ENCODE measurements at regions of chr6 and their contacts with region 1.

Region 1: DNA sequence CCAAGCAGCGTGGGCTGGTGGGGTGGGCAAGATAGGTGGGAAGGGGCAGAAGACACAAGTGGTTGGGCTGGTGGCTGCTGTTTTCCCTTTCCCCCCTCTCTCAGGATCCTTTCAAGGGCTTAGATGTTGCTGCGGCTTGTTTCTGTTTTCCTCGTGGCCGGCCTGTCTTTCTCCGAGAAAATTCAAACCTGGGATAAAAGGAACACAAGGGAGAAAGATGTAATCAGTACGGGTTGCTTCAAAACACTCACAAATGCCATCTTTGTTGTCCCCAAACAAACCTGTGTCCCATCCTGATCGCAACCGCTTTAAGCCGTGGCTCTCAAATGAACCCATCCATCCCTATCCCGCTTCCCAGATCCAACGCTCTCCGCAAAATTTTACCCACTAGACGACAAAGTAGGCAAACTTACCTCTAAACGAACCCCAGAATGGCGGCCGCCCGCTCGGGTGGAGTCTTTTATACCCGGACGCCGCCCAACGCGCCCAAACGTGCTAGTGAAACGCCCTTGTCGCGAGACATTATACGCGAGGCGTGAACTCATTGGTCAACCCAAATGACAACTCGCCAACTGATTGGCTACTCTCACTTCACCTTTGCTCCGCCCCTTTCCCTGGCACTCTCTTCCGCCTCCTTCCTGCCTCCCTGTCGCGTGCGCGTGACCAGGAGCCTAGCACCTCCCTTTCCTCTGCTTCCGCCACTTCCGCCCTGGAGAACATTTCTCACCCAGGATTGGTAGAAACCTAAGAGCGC is at the start of gene PPP1R10:
- DNase-seq: peak; percentile 86
- ATAC-seq: peak; percentile 77
- H3K4me3 Mint-ChIP-seq: peak within 1 kb of the TSS; percentile 99
- H3K27ac Mint-ChIP-seq: peak within 1 kb of the TSS; percentile 99
- H3K4me1 Mint-ChIP-seq: peaks cover 35% of the 10 kb centered on the region
- H3K27me3 Mint-ChIP-seq: no peaks in the 10 kb centered on the region
- CTCF ChIP-seq: no peak
- total RNA-seq, gene PPP1R10: 85.6 and 112 TPM in 2 replicates

Region 2: DNA sequence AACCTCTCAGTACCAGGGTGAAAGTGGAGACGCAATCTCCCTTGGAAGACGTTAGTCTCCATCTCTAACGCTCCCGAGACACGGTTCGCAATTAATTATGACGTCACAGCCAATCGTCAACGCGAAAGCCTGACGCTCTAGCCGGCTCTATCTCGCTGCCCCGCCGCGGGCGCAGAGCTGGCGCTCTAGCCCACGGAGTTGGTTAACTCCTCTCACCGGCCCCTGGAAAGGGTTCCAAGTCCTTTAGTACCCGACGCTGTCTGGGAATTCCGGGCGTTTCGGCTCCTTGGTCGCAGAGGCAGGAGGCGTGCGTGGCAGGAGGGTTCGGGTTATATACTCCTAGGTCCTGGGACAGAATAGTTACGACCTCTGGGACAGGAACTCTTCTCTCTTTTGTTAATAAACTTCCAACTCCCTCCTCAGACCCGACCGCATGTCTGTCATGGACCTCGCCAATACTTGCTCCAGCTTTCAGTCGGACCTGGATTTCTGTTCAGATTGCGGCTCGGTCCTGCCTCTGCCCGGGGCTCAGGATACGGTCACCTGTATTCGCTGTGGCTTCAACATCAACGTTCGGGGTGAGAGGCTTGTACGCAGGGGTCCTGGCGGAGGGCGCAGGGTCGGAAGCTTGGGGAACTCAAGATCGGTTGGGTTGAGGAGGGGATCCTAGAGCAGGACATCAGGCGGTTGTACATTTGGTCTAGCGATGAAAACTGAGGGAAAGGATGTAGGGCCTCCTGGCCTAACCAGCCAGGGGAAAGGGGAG is 555.7 kb before region 1 on chr6 and contains the start of gene POLR1H:
- CTCF ChIA-PET with region 1: no interaction called
- POLR2A ChIA-PET with region 1: no interaction called
- intact Hi-C with region 1: loop called (anchors 5 kb)
- DNase-seq: peak; percentile 73
- ATAC-seq: peak; percentile 91
- H3K4me3 Mint-ChIP-seq: peak within 1 kb of the TSS; percentile 98
- H3K27ac Mint-ChIP-seq: peak within 1 kb of the TSS; percentile 97
- H3K4me1 Mint-ChIP-seq: peaks cover 44% of the 10 kb centered on the region
- H3K27me3 Mint-ChIP-seq: no peaks in the 10 kb centered on the region
- CTCF ChIP-seq: no peak
- total RNA-seq, gene POLR1H: 44.1 and 50.5 TPM in 2 replicates

Region 3: DNA sequence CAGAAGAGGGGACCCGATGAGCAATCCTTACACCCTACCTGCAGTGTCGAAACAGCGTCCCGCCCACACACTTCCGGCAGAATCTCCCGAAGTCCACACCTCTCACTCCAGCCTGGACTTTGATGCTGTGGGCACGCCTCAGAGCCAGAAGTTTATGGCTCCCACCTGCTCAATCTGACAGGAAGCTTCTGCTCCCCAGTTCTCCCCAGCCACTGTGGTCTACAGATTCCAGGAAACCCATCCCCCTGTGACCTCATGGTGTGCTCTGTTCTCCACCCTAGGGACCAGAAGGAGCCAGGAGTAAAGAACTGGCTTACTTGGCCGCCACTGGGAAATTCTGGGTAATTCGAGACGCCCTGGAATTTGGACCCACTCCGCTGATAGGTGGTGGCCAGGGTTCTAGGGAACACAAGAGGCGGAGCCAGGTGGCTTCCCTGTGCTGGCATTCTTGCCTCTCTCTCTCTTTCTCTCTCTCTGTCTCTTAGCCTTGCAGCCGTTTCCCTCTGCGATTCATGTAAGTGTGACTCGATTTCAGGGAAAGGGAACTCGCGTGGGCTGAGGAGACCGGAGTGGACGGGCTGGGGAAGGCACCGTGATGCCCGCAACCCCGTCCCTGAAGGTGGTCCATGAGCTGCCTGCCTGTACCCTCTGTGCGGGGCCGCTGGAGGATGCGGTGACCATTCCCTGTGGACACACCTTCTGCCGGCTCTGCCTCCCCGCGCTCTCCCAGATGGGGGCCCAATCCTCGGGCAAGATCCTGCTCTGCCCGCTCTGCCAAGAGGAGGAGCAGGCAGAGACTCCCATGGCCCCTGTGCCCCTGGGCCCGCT is 453.7 kb before region 1 on chr6 and contains the start of gene TRIM15:
- CTCF ChIA-PET with region 1: no interaction called
- POLR2A ChIA-PET with region 1: no interaction called
- intact Hi-C with region 1: no loop called
- DNase-seq: no peak
- ATAC-seq: no peak
- H3K4me3 Mint-ChIP-seq: no peak within 1 kb of the TSS
- H3K27ac Mint-ChIP-seq: no peak within 1 kb of the TSS
- H3K4me1 Mint-ChIP-seq: no peaks in the 10 kb centered on the region
- H3K27me3 Mint-ChIP-seq: peaks cover 22% of the 10 kb centered on the region
- CTCF ChIP-seq: no peak
- total RNA-seq, gene TRIM15: not detected in 2 replicates

Region 4: DNA sequence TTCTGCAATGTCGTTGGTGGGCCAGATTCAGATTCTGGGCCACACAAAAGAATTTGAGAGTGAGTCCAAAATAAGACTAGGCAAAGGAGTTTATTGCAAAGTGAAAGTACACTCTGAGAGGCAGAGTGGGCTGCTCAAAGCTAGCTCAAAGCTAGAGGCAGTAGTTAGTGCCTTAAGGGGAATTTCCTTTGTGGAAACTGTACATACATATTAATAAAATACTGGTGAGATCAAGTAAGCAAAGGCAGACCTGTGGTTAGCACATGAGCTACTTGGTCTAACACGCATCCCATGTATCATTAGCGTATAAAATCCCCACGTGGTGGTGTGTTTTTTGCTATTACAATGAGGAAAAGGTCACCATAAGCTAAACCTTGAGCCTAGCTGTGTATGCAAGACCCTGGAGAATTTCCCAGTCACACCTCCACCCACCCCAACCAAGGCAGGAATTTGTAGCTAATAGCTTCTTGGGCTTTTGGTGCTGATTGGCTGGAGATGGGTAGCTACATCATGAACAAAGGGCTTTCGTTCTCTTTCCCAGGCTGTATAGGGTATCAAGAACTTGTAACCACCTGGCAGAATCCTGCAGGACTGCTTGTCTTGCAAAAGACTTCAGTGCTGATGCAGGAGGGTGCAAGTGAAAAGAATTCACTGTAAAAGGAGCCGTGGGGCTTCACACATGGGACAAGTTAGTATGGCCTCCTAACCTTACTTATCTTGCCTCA is 389.1 kb before region 1 on chr6:
- CTCF ChIA-PET with region 1: no interaction called
- POLR2A ChIA-PET with region 1: no interaction called
- intact Hi-C with region 1: no loop called
- DNase-seq: no peak
- ATAC-seq: no peak
- H3K4me3 Mint-ChIP-seq: no peak overlapping the region
- H3K27ac Mint-ChIP-seq: no peak overlapping the region
- H3K4me1 Mint-ChIP-seq: no peaks in the 10 kb centered on the region
- H3K27me3 Mint-ChIP-seq: peaks cover 10% of the 10 kb centered on the region
- CTCF ChIP-seq: no peak

Region 5: DNA sequence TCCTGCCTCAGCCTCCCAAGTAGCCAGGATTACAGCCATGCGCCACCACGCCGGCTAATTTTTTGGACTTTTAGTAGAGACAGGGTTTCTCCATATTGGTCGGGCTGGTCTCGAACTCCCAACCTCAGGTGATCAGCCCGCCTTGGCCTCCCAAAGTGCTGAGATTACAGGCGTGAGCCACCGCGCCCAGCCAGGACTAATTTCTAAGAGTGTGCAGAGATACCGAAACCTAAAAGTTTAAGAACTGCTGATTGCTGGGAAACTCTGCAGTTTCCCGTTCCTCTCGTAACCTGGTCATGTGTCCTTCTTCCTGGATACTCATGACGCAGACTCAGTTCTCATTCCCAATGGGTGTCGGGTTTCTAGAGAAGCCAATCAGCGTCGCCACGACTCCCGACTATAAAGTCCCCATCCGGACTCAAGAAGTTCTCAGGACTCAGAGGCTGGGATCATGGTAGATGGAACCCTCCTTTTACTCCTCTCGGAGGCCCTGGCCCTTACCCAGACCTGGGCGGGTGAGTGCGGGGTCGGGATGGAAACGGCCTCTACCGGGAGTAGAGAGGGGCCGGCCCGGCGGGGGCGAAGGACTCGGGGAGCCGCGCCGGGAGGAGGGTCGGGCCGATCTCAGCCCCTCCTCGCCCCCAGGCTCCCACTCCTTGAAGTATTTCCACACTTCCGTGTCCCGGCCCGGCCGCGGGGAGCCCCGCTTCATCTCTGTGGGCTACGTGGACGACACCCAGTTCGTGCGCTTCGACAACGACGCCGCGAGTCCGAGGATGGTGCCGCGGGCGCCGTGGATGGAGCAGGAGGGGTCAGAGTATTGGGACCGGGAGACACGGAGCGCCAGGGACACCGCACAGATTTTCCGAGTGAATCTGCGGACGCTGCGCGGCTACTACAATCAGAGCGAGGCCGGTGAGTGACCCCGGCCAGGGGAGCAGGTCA is 127.6 kb before region 1 on chr6 and contains the start of gene HLA-E:
- CTCF ChIA-PET with region 1: interaction called, 3 read pairs
- POLR2A ChIA-PET with region 1: interaction called, 11 read pairs
- intact Hi-C with region 1: no loop called
- DNase-seq: peak; percentile 70
- ATAC-seq: peak; percentile 83
- H3K4me3 Mint-ChIP-seq: peak within 1 kb of the TSS; percentile 98
- H3K27ac Mint-ChIP-seq: peak within 1 kb of the TSS; percentile 97
- H3K4me1 Mint-ChIP-seq: peaks cover 58% of the 10 kb centered on the region
- H3K27me3 Mint-ChIP-seq: no peaks in the 10 kb centered on the region
- CTCF ChIP-seq: no peak
- total RNA-seq, gene HLA-E: 737 and 740 TPM in 2 replicates

Region 6: GRCh38 chr6:30556066-30556905 is 60.7 kb before region 1 on chr6 and contains the start of gene GNL1:
- CTCF ChIA-PET with region 1: no interaction called
- POLR2A ChIA-PET with region 1: interaction called, 50 read pairs
- intact Hi-C with region 1: loop called (anchors 1 kb)
- DNase-seq: peak; percentile 99
- ATAC-seq: peak; percentile 89
- H3K4me3 Mint-ChIP-seq: peak within 1 kb of the TSS; percentile 94
- H3K27ac Mint-ChIP-seq: peak within 1 kb of the TSS; percentile 97
- H3K4me1 Mint-ChIP-seq: peaks cover 40% of the 10 kb centered on the region
- H3K27me3 Mint-ChIP-seq: no peaks in the 10 kb centered on the region
- CTCF ChIP-seq: no peak
- total RNA-seq, gene GNL1: 67.2 and 67.4 TPM in 2 replicates

Region 7: DNA sequence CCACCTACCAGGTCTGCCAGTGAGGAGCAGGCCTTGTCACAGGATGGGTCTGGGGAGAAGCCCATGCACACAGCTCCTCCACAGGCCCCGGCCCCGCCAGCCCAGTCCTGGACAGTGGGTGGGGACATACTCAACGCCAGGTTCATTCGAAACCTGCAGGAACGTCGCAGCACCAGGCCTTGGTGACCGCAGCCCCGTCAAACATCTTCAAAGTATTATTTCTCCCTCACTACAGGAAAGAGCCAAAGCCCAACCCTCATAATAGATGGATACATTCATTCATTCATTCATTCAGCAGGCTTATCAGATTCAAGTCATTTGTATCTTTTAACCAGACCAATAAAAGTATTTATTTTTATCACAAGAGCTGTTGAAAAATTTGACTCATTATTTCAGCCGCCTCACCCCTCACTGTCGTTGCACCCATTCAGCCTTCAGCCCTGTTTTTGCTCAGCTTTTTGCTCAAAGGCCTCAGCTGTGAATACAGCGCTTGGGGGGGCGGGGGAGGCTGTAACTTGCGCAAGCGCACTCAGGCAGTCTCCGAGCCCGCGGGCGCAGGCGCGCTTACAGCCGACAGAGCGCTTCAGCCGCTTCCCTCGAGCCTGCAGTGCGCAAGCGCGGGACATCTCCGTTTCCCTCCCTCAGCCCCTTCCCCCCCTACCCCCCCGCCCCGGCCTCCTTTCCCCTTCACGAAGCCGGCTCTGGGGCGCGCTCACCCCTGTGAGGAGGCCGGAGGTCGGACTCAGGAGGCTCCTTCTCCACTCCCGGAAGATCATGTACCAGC is 29.7 kb after region 1 on chr6 and contains the start of gene C6orf136:
- CTCF ChIA-PET with region 1: no interaction called
- POLR2A ChIA-PET with region 1: interaction called, 24 read pairs
- intact Hi-C with region 1: loop called (anchors 1 kb)
- DNase-seq: peak; percentile 82
- ATAC-seq: peak; percentile 78
- H3K4me3 Mint-ChIP-seq: peak within 1 kb of the TSS; percentile 91
- H3K27ac Mint-ChIP-seq: peak within 1 kb of the TSS; percentile 90
- H3K4me1 Mint-ChIP-seq: peaks cover 35% of the 10 kb centered on the region
- H3K27me3 Mint-ChIP-seq: no peaks in the 10 kb centered on the region
- CTCF ChIP-seq: no peak
- total RNA-seq, gene C6orf136: 21.6 and 35.6 TPM in 2 replicates

Region 8: DNA sequence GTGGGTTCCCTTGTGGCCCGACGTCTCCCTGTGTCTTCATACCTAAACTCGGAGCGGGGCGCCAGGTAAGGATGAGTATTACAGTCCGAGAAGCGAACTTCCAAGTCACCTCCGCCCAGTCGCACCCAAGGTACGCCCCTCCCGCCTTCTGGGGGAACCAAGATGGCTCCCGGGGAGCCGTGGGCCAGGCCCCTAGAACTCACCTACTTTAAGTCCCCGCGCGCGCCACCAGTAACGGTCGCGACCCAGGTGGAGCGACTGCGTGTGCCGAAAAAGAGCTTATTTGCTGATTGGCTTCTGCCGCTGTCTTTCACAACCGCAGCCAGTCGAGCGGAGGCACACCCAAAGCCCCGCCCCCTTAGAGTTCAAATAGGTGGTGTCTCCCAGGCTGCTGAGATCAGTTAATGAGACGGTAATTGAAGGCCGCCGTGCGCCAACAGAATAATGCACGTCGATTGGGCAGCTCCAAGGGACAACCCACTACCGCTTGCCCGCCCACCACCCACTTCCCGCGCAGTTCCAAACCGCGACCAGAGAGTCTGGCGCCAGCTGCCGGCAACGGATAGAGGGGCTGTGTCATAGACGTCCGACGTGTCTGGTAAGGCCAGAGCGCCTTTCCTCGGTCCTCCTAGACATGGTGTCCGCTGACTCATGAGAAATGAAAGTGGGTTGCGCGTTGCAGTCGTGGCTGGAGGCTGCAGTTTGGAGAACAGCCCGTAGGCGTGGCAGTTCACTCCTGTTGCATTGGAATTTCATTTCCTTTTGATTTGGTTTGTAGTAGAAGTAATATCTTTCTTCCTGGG is 100.3 kb after region 1 on chr6 and contains the start of gene MDC1:
- CTCF ChIA-PET with region 1: interaction called, 14 read pairs
- POLR2A ChIA-PET with region 1: interaction called, 41 read pairs
- intact Hi-C with region 1: loop called (anchors 1 kb)
- DNase-seq: peak; percentile 91
- ATAC-seq: peak; percentile 73
- H3K4me3 Mint-ChIP-seq: peak within 1 kb of the TSS; percentile 99
- H3K27ac Mint-ChIP-seq: peak within 1 kb of the TSS; percentile 99
- H3K4me1 Mint-ChIP-seq: peaks cover 57% of the 10 kb centered on the region
- H3K27me3 Mint-ChIP-seq: no peaks in the 10 kb centered on the region
- CTCF ChIP-seq: no peak
- total RNA-seq, gene MDC1: 62.4 and 65.6 TPM in 2 replicates

Region 9: GRCh38 chr6:31356946-31357466 is 740.0 kb after region 1 on chr6 and contains the start of gene HLA-B:
- CTCF ChIA-PET with region 1: no interaction called
- POLR2A ChIA-PET with region 1: no interaction called
- intact Hi-C with region 1: loop called (anchors 5 kb)
- DNase-seq: peak; percentile 64
- ATAC-seq: peak; percentile 85
- H3K4me3 Mint-ChIP-seq: peak within 1 kb of the TSS; percentile 95
- H3K27ac Mint-ChIP-seq: peak within 1 kb of the TSS; percentile 100
- H3K4me1 Mint-ChIP-seq: peaks cover 54% of the 10 kb centered on the region
- H3K27me3 Mint-ChIP-seq: no peaks in the 10 kb centered on the region
- CTCF ChIP-seq: no peak
- total RNA-seq, gene HLA-B: 3,667 and 3,668 TPM in 2 replicates

Measured in activated B cell treated with CpG ODN at 0.5 μM for 24 hours (primary cell).